CD8-positive, alpha-beta memory T cell (primary cell): ENCODE measurements at regions of chr9 and their contacts with region 1.

Region 1: DNA sequence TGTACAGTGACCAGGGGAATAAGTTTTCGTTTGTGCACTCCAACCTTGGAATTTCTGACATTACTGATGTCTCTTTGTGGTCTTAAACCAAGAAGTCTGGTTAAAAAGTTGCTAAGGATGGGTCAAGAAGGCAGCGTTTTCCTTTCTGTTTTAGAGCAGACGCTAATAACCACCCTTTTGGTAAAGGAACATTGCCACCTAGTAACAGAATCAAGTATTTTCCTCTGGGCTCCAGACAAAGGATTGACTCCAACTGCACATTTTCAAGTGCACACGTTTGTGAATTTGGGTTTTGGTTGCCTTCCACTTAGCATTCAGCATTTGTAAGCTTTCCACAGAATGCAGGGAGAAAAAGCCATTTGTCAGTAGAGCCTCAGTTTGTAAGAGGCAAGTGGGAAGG is 22.2 kb upstream of the CEP78 start:
- DNase-seq: peak in 2 of 5 donors; percentile 16 to 32
- H3K4me3 ChIP-seq: no peak overlapping the region
- H3K4me3 Mint-ChIP-seq: peak overlapping the region in 1 of 7 donors; percentile 51
- H3K27ac ChIP-seq: no peak overlapping the region
- H3K27ac Mint-ChIP-seq: peak overlapping the region in 3 of 8 donors; percentile 65 to 66 (median 66)
- H3K4me1 ChIP-seq: peaks cover 40% of the 10 kb centered on the region
- H3K4me1 Mint-ChIP-seq: peaks cover 44 to 52% (median 47%) of the 10 kb centered on the region in 3 donors
- H3K27me3 ChIP-seq: no peaks in the 10 kb centered on the region
- H3K27me3 Mint-ChIP-seq: peaks cover 0 to under 1% of the 10 kb centered on the region in 2 donors

Region 2: GRCh38 chr9:78196258-78196657 is 17.5 kb before region 1 on chr9:
- CTCF ChIA-PET with region 1: interaction called, 13 read pairs
- POLR2A ChIA-PET with region 1: interaction called, 7 read pairs
- DNase-seq: no peak
- H3K4me3 ChIP-seq: no peak overlapping the region
- H3K4me3 Mint-ChIP-seq: no peak overlapping the region
- H3K27ac ChIP-seq: no peak overlapping the region
- H3K27ac Mint-ChIP-seq: peak overlapping the region in 2 of 8 donors; percentile 0 to 21
- H3K4me1 ChIP-seq: peaks cover 16% of the 10 kb centered on the region
- H3K4me1 Mint-ChIP-seq: peaks cover 15 to 31% (median 22%) of the 10 kb centered on the region in 3 donors
- H3K27me3 ChIP-seq: no peaks in the 10 kb centered on the region
- H3K27me3 Mint-ChIP-seq: no peaks in the 10 kb centered on the region

Region 3: DNA sequence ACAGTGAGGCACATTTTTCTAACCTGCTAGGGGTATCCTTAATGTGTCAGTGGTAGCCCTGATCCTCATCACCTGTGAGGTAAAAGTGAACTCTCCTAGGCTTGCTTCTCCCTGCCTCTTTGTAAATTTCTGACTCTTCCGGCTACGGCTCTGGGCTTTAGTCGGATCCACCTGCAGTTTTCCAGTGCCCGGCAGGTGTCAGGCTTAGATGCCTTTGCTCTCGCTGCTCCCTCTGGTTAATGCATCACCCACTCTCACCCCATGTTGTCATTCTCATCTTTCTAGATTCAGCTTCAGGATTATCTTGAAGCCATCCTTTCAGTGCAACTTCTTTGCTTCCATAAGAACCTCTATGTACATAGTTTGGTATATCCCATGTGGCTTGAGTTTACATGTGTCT is 25.8 kb after region 1 on chr9:
- CTCF ChIA-PET with region 1: no interaction called
- POLR2A ChIA-PET with region 1: no interaction called
- DNase-seq: no peak
- H3K4me3 ChIP-seq: no peak overlapping the region
- H3K4me3 Mint-ChIP-seq: peak overlapping the region in 5 of 7 donors; percentile 0 to 76 (median 30)
- H3K27ac ChIP-seq: no peak overlapping the region
- H3K27ac Mint-ChIP-seq: peak overlapping the region in 5 of 8 donors; percentile 12 to 71 (median 57)
- H3K4me1 ChIP-seq: peaks cover 46% of the 10 kb centered on the region
- H3K4me1 Mint-ChIP-seq: peaks cover 48 to 70% (median 62%) of the 10 kb centered on the region in 3 donors
- H3K27me3 ChIP-seq: no peaks in the 10 kb centered on the region
- H3K27me3 Mint-ChIP-seq: peaks cover 0 to 2% of the 10 kb centered on the region in 2 donors